Psoas muscle (tissue), 8 donors: ENCODE measurements at regions of chr13 and their contacts with region 1.

Region 1: GRCh38 chr13:113458253-113459065 is 5.2 kb upstream of the ADPRHL1 start:
- DNase-seq: peak in 1 of 2 donors; percentile 39
- ATAC-seq: no peak
- H3K4me3 ChIP-seq: no peak overlapping the region
- H3K27ac ChIP-seq: no peak overlapping the region
- H3K4me1 ChIP-seq: peaks cover 5% of the 10 kb centered on the region
- H3K27me3 ChIP-seq: no peaks in the 10 kb centered on the region
- CTCF ChIP-seq: peak; percentile 32

Region 2: DNA sequence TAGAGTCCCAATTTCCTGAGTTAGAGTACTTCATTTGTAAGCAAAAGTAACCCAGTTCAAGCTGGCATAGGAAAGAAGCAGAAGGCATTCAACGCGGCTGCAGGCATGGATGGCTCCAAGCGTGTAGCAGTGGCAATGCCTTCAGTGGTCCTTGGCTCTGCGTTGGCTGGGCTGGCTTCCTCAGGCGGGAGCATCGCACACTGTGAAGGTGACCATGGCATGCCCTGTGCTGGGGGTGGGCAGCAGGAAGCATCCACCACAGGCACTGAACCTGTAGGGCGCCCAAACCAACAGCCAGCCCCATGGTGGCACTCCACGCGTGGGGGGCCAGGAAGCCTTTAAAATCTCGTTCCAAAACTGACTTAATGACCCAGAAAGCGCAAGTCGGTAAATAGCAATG is 1135.9 kb before region 1 on chr13:
- intact Hi-C with region 1: no loop called
- DNase-seq: no peak
- ATAC-seq: no peak
- H3K4me3 ChIP-seq: no peak overlapping the region
- H3K27ac ChIP-seq: no peak overlapping the region
- H3K4me1 ChIP-seq: no peaks in the 10 kb centered on the region
- H3K27me3 ChIP-seq: no peaks in the 10 kb centered on the region
- CTCF ChIP-seq: no peak

Region 3: DNA sequence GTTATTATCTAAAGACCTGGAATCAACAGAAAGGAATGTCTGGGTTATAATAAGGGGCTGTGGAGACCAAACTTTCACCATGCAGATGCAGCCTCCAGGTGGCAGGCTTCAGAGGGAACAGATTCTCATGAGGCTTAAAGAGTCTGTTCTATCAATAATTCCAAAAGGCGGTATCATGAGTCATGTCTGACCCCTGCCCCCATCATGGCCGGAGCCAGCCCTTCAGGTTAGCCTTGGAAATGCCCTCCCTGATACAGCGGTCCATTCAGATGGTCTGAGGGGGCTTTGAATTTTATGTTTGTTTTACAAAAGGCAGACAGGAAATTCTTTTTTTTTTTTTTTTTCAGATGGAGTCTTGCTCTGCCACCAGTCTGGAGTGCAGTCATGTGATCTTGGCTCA is 183.1 kb before region 1 on chr13:
- intact Hi-C with region 1: loop called in 1 of 2 experiments (anchors 10 kb)
- DNase-seq: peak; percentile 41 to 66
- ATAC-seq: peak; percentile 78 to 93 (median 85)
- H3K4me3 ChIP-seq: no peak overlapping the region
- H3K27ac ChIP-seq: no peak overlapping the region
- H3K4me1 ChIP-seq: no peaks in the 10 kb centered on the region
- H3K27me3 ChIP-seq: no peaks in the 10 kb centered on the region
- CTCF ChIP-seq: peak; percentile 62

Region 4: DNA sequence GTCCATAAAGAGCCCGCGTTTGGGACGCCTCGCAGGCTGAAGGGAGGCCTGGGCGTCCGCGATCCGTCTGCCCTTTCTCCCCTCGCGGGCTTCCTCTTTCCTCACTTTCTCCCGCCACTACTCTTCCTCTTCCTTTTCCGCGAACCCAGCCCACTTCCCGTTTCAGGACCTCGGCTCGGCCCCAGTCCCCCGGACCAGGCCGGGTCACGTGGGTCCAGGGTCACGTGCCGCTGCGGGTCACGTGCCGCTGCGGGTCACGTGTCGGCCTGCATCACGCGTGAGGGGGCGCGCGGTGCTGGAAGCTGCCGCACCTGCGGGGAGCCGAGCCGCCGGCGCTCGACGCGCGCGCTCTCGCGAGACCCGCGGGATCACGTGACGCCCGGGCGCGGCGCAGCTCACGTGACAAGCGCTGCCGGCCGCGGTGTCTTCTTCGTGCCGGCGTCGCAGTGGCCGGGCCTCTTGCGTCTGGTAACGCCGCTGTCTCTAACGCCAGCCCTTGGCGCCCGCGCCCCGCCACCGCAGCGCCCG is 161.6 kb before region 1 on chr13 and contains the start of gene LAMP1:
- intact Hi-C with region 1: loop called in 1 of 2 experiments (anchors 10 kb)
- DNase-seq: peak; percentile 100
- ATAC-seq: peak; percentile 88 to 92 (median 90)
- H3K4me3 ChIP-seq: peak within 1 kb of the TSS; percentile 98
- H3K27ac ChIP-seq: peak within 1 kb of the TSS; percentile 98
- H3K4me1 ChIP-seq: peaks cover 43% of the 10 kb centered on the region
- H3K27me3 ChIP-seq: no peaks in the 10 kb centered on the region
- CTCF ChIP-seq: no peak
- total RNA-seq, gene LAMP1: 53.7 to 71.5 (median 67.8) TPM

Region 5: DNA sequence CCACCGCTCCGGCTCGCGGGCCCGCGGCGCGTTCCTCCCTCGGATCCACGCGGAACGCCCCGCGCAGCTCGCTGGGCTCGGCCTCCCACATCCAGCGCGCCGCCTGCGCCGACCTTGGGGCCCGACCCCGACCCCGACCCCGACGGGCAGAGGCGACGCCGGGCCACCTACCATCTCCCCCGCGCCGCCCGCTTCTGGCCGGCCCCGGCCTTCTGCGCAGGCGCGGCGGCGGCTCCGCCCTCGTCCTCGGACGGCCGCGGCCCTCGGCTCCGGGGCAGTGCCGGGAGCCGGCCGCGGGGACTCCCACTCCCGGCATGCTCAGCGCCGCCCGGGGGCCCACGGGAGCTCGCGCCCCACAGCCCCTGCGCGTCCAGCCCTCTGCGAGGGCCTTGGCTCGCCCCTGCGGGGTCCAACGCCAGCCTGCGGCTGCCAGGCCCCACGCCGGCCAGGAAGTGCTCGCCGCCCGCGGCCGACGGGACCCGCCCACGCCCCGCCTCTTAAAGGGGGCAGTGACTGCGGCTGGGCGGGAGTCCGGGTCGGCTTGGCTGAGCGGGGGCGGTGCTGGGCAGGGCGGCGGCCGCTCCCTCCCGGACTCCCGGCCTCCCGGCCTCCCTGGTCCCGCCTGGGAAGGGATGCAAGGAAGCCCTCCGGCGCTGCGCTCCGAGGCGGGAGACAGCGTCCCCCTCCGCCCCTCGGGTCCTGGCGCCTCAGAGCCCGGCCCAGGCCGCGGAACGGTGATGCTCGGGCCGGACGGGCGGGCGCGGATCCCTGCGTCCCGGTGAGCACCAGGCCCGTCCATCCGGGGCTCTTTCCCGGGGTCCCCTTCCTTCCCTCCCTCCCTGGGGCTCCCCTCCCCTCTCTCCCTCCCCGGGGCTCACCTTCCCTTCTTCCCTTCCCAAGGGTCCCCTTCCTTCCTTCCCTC is 32.3 kb after region 1 on chr13 and contains the start of gene DCUN1D2:
- intact Hi-C with region 1: loop called in 1 of 2 experiments (anchors 1 kb)
- DNase-seq: peak; percentile 96 to 98
- ATAC-seq: peak; percentile 90 to 95 (median 91)
- H3K4me3 ChIP-seq: peak within 1 kb of the TSS; percentile 81
- H3K27ac ChIP-seq: peak within 1 kb of the TSS; percentile 88
- H3K4me1 ChIP-seq: peaks cover 69% of the 10 kb centered on the region
- H3K27me3 ChIP-seq: no peaks in the 10 kb centered on the region
- CTCF ChIP-seq: no peak
- total RNA-seq, gene DCUN1D2: 65.7 to 87.0 (median 77.6) TPM

Region 6: DNA sequence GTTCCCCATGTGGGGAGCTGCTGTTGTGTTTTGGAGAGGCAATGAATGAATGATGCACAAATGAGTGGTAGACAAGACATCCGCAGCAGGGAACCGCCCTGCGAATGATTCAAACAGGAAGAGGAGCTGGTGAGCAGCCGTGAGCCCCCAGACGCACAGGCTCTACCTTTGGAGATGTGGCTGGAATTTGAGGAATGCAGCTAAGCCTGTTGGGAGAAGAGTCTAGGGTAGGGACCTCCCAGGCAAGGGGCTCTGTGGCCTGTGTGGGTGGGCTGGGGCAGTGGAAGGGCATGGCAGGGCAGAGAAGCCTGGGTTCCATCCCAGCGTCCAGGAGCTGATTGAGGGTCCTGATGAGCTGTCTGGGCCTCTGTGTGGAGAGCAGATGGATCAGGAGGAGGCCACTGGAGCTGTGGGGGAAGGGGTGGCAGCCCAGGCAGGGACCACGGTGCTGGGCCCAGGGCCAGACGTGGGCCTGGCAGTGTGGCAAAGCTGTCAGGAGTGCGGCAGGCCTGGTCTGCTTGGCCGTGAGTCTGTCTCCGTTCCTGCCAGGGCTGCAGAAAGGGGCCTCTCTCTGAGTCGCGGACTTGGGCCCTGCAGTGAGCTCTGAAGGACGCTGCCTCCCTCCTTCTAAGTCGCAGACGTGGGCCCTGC is 73.8 kb after region 1 on chr13:
- intact Hi-C with region 1: no loop called
- DNase-seq: no peak
- ATAC-seq: no peak
- H3K4me3 ChIP-seq: no peak overlapping the region
- H3K27ac ChIP-seq: no peak overlapping the region
- H3K4me1 ChIP-seq: no peaks in the 10 kb centered on the region
- H3K27me3 ChIP-seq: no peaks in the 10 kb centered on the region
- CTCF ChIP-seq: no peak